ENCODE measurements at regions of chr7 and their contacts with region 1.

Region 1: DNA sequence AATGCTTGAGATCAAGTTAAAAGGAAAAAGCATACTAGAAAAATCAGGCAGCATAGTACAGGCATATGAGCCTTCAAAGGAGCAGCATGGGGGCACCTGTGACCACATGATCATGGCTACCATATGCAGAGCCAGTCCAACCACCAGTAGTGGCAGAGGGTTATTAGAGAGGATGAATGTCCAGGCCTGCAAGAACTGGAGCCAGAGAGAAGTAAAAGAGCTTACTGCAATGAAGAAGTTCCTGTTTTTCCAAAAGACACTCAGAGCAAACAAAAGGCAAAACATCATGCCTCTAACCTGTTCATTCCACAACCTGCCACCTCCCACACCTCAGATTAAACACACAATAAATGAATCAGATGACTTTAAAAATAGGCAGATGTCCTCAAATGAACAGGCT is 99.6 kb upstream of the NAMPT start:
- DNase-seq: peak; percentile 16
- ATAC-seq: peak; percentile 48
- H3K4me3 ChIP-seq: no peak overlapping the region
- H3K27ac ChIP-seq: no peak overlapping the region
- H3K4me1 ChIP-seq: no peaks in the 10 kb centered on the region
- H3K27me3 ChIP-seq: no peaks in the 10 kb centered on the region
- CTCF ChIP-seq: no peak

Region 2: DNA sequence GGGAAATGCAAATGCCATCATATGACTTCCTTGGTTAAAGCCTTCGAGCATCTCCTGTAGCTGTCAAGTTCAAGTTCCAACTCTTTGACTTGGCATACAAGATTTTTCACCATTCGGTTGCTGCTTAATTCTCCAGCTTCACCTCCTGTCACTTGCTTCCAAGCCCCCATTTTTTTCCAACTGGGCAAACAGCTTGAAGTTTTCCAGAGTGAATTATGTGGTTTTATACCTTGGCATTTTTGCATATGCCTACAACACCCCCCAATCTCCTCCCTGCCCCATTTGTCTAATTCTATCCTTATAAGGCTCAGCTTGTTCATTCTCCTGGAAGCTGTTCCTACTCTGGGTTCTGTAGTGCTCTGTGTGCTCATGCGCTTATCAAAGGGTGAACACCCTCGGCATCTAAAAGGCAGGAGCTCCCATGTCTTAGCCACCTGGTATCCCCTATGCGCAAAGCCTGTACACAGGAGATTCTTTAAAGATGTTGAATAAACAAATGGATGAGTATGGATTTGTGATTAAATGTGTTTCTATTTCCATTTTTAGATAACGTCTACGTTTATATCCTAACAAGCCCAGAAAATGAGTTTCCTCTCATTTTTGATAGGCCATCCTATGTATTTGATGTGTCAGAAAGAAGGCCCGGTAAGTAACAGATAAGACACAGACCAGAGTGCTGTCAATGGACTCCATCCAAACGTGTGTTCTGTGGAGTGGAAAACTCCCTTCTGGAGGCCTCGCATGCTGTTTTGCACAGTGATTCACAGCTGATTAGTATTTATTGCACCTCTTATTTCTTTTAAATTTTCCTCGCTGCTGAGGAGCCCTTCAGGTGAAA is 368.8 kb before region 1 on chr7:
- CTCF ChIA-PET with region 1: no interaction called
- POLR2A ChIA-PET with region 1: interaction called, 13 read pairs
- intact Hi-C with region 1: no loop called
- DNase-seq: no peak
- ATAC-seq: no peak
- H3K4me3 ChIP-seq: no peak overlapping the region
- H3K27ac ChIP-seq: no peak overlapping the region
- H3K4me1 ChIP-seq: no peaks in the 10 kb centered on the region
- H3K27me3 ChIP-seq: no peaks in the 10 kb centered on the region
- CTCF ChIP-seq: no peak

Region 3: DNA sequence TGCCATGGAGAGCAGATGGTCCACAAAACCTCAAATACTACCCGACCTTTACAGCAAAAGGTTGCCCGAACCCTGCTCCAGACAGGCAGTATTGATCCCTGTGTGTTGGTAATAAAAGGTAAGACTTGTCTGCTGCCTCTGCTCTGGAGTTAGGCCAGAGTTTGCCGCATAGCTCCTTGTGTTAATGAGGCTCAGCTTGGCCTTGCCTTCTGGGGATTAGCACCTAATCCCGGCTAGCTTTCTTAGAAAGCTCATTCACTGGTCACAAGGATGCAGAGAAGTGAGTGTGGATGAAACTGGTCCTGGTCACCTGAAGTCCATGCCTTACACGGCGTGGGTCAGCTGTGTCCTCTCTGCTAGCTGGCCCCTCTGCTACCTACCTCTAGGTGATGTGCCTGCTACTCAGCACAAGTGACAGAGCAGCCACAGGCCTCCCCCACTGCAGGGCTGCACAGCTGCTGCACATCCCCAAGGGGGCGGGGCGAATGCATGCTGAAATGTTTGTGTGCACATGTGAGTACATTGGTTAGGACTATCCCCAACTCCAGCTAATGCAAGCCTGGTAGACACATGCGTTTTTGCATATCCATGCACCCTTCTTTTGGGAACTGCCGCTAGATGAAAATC is 240.5 kb before region 1 on chr7:
- CTCF ChIA-PET with region 1: no interaction called
- POLR2A ChIA-PET with region 1: interaction called, 23 read pairs
- intact Hi-C with region 1: no loop called
- DNase-seq: no peak
- ATAC-seq: peak; percentile 33; the same call in 1 of the 2 replicates
- H3K4me3 ChIP-seq: no peak overlapping the region
- H3K27ac ChIP-seq: no peak overlapping the region
- H3K4me1 ChIP-seq: peaks cover 6% of the 10 kb centered on the region
- H3K27me3 ChIP-seq: no peaks in the 10 kb centered on the region
- CTCF ChIP-seq: no peak

Measured in PC-3 (cell line).